Gastrocnemius medialis (tissue), 4 donors: ENCODE measurements at regions of chrX and their contacts with region 1.

Region 1: GRCh38 chrX:53433651-53434639 is at the start of gene HSD17B10:
- DNase-seq: peak; percentile 78 to 87
- ATAC-seq: peak; percentile 87 to 93
- H3K4me3 ChIP-seq: peak within 1 kb of the TSS; percentile 63 to 71 (median 69)
- H3K27ac ChIP-seq: peak within 1 kb of the TSS; percentile 78 to 90 (median 86)
- H3K4me1 ChIP-seq: peaks cover 5 to 9% of the 10 kb centered on the region in 2 donors
- H3K27me3 ChIP-seq: no peaks in the 10 kb centered on the region
- CTCF ChIP-seq: no peak
- POLR2A ChIP-seq: peak; percentile 58 to 83
- total RNA-seq, gene HSD17B10: 62.2 to 106 (median 75.3) TPM

Region 2: DNA sequence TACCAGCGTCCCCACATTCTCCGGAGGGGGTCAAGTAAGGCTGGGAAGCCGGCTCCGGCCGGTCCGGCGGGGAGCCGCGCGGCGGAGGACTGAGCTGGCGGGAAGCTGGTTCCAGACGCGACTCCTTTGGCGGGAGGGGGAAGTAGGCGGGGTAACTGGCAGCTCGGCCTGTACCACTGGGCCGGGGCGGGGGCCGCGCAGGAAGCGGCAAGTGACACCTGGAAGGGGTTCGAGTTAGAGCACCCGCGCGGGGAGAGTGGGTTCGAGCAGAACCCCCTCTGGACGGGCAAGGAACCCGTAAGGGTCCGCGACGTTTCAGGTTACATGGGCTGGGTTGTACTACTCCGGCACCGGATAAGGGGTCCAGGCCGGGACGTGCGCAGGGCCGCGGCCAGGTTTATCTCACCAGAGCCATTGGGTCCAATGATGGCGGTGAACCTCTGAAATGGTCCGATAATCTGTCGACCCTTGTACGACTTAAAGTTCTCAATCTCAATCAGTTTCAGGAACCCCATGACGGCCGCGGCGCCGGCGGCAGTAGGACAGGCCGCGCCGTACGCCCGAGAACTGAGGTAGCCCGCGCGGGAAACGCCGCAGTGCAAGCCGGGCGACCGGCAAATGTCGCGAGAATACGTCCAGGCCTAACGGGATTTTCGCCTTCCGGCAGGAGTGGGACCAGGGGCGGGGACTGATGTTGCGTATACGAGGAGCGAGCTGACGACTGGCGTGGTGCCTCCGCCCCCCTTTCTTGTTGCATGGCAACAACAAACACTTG is 11.7 kb before region 1 on chrX and contains the start of gene SMC1A:
- in situ Hi-C with region 1: no loop called
- intact Hi-C with region 1: loop called (anchors 1 kb)
- DNase-seq: peak; percentile 90 to 94
- ATAC-seq: peak; percentile 95 to 96
- H3K4me3 ChIP-seq: peak within 1 kb of the TSS; percentile 65 to 89 (median 81)
- H3K27ac ChIP-seq: peak within 1 kb of the TSS; percentile 91 to 96 (median 94)
- H3K4me1 ChIP-seq: peaks cover 11 to 29% of the 10 kb centered on the region in 2 donors
- H3K27me3 ChIP-seq: no peaks in the 10 kb centered on the region
- CTCF ChIP-seq: peak in 1 of 5 experiments; percentile 10
- POLR2A ChIP-seq: peak; percentile 60 to 73
- total RNA-seq, gene SMC1A: 12.9 to 23.5 (median 17.1) TPM